Naive thymus-derived CD4-positive, alpha-beta T cell (primary cell): ENCODE measurements at regions of chr1 and their contacts with region 1.

Region 1: GRCh38 chr1:98053471-98054366 is 132.9 kb upstream of the DPYD start:
- DNase-seq: peak; percentile 12 to 74 (median 55)
- ATAC-seq: peak; percentile 91
- H3K4me3 ChIP-seq: peak overlapping the region; percentile 55
- H3K4me3 Mint-ChIP-seq: peak overlapping the region; percentile 61 to 81 (median 72)
- H3K27ac ChIP-seq: no peak overlapping the region
- H3K27ac Mint-ChIP-seq: no peak overlapping the region
- H3K4me1 ChIP-seq: peaks cover 6 to 20% of the 10 kb centered on the region in 2 donors
- H3K4me1 Mint-ChIP-seq: peaks cover 17 to 29% (median 23%) of the 10 kb centered on the region in 7 donors
- H3K27me3 ChIP-seq: peaks cover 18 to 23% of the 10 kb centered on the region in 2 donors
- H3K27me3 Mint-ChIP-seq: peaks cover 78 to 90% (median 80%) of the 10 kb centered on the region in 5 donors

Region 2: DNA sequence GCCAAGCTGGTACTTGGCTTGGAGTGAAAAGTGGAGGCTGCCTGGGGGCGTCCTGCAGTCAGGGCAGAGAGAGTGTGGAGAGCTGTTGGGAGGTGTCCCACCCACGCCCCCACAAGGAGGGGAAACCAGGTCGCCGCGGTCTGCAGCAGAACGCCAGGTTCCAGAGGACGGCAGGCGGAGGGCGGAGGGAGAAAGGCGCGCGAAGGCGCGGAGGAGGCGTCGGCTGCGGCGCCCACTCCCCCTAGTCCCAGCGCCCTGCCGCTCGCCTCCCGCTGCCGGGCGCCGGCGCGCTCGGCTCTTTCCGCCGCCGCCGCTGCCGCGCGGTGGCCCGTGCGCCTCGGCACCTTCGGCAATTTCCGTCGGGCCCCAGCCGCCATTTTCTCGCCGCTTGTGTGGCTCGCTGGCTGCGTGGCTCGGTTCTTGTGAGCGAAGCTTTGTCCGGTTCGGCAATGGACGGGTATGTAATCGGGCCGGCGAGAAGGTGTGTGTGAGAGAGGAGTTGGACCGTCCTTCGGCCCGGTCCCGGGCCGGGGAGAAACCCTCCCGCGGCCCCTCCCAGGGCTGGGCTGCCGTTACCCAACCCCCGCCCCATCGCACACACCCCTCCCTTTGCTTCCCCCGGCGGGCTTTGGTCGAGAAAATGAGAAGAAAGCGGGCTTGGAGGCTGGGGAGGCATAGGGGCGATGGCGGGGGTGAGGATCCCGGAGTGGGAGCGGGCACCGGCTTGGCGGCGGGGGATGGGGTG is 1332.1 kb before region 1 on chr1 and contains the start of gene PTBP2:
- CTCF ChIA-PET with region 1: no interaction called
- POLR2A ChIA-PET with region 1: no interaction called
- intact Hi-C with region 1: loop called (anchors 5 to 10 kb)
- DNase-seq: peak; percentile 75 to 90 (median 86)
- ATAC-seq: peak; percentile 93
- H3K4me3 ChIP-seq: peak within 1 kb of the TSS; percentile 89
- H3K4me3 Mint-ChIP-seq: peak within 1 kb of the TSS; percentile 88 to 99 (median 97)
- H3K27ac ChIP-seq: peak within 1 kb of the TSS; percentile 84
- H3K27ac Mint-ChIP-seq: peak within 1 kb of the TSS; percentile 83 to 97 (median 95)
- H3K4me1 ChIP-seq: peaks cover 10 to 11% of the 10 kb centered on the region in 2 donors
- H3K4me1 Mint-ChIP-seq: peaks cover 17 to 35% (median 29%) of the 10 kb centered on the region in 7 donors
- H3K27me3 ChIP-seq: no peaks in the 10 kb centered on the region
- H3K27me3 Mint-ChIP-seq: peaks cover 0 to 16% (median 0%) of the 10 kb centered on the region in 5 donors
- total RNA-seq, gene PTBP2: 14.9 to 32.6 (median 25.6) TPM

Region 3: GRCh38 chr1:97186404-97186803 is 867.3 kb before region 1 on chr1:
- CTCF ChIA-PET with region 1: interaction called, 3 read pairs
- POLR2A ChIA-PET with region 1: no interaction called
- intact Hi-C with region 1: loop called (anchors 1 kb)
- DNase-seq: peak in 2 of 9 donors; percentile 1 to 2
- ATAC-seq: no peak
- H3K4me3 ChIP-seq: no peak overlapping the region
- H3K4me3 Mint-ChIP-seq: no peak overlapping the region
- H3K27ac ChIP-seq: no peak overlapping the region
- H3K27ac Mint-ChIP-seq: no peak overlapping the region
- H3K4me1 ChIP-seq: no peaks in the 10 kb centered on the region
- H3K4me1 Mint-ChIP-seq: peaks cover 0 to 1% (median 0%) of the 10 kb centered on the region in 7 donors
- H3K27me3 ChIP-seq: no peaks in the 10 kb centered on the region
- H3K27me3 Mint-ChIP-seq: no peaks in the 10 kb centered on the region

Region 4: GRCh38 chr1:97562081-97562480 is 491.6 kb before region 1 on chr1:
- CTCF ChIA-PET with region 1: no interaction called
- POLR2A ChIA-PET with region 1: no interaction called
- intact Hi-C with region 1: loop called in 1 of 2 experiments (anchors 5 kb)
- DNase-seq: no peak
- ATAC-seq: no peak
- H3K4me3 ChIP-seq: no peak overlapping the region
- H3K4me3 Mint-ChIP-seq: no peak overlapping the region
- H3K27ac ChIP-seq: no peak overlapping the region
- H3K27ac Mint-ChIP-seq: no peak overlapping the region
- H3K4me1 ChIP-seq: no peaks in the 10 kb centered on the region
- H3K4me1 Mint-ChIP-seq: peaks cover 0 to 4% (median 0%) of the 10 kb centered on the region in 7 donors
- H3K27me3 ChIP-seq: no peaks in the 10 kb centered on the region
- H3K27me3 Mint-ChIP-seq: no peaks in the 10 kb centered on the region

Region 5: DNA sequence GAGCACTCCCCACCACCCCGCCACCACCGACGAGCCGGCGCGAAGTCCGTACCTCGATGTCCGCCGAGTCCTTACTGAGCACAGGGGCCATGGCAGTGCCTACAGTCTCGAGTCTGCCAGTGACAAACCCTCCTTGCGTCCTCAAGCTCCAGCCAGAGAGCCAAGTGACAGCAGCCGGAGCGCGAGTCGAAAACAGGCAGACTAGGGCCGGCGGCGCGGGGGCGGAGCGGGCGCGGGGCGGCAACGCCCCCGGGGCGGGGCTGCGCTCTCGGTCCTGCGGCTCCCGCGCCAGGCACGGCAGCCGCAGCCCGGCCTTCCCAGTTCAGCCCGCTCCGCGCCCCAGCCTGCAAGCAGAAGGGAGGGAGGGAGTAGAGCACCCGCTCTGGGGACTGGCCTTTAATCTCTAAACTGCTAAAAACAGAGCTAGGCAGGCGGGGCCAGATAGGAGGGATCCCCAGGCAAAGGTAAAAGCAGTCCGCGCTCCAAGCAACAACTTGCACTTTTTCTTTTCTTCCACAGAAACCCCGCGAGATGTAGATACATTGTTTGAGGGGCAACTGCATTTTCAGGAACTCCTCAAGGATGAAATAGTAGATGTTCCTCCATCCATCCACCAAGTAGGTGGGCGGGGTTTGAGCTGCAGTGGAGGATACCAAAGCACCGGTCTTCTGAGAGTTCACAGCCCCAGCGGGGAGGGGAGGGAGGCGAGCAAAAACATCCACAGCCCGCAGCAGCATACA is 132.7 kb before region 1 on chr1 and contains the start of gene DPYD:
- CTCF ChIA-PET with region 1: interaction called, 3 read pairs
- POLR2A ChIA-PET with region 1: no interaction called
- intact Hi-C with region 1: loop called (anchors 1 kb)
- DNase-seq: peak; percentile 79 to 87 (median 84)
- ATAC-seq: peak; percentile 94
- H3K4me3 ChIP-seq: peak within 1 kb of the TSS; percentile 93
- H3K4me3 Mint-ChIP-seq: peak within 1 kb of the TSS; percentile 88 to 99 (median 98)
- H3K27ac ChIP-seq: peak within 1 kb of the TSS; percentile 90
- H3K27ac Mint-ChIP-seq: peak within 1 kb of the TSS; percentile 81 to 98 (median 96)
- H3K4me1 ChIP-seq: peaks cover 16 to 17% of the 10 kb centered on the region in 2 donors
- H3K4me1 Mint-ChIP-seq: peaks cover 35 to 57% (median 54%) of the 10 kb centered on the region in 7 donors
- H3K27me3 ChIP-seq: no peaks in the 10 kb centered on the region
- H3K27me3 Mint-ChIP-seq: no peaks in the 10 kb centered on the region
- total RNA-seq, gene DPYD: 52.6 to 87.2 (median 57.4) TPM

Region 6: GRCh38 chr1:98496246-98496995 is 442.7 kb after region 1 on chr1:
- CTCF ChIA-PET with region 1: no interaction called
- POLR2A ChIA-PET with region 1: no interaction called
- intact Hi-C with region 1: no loop called
- DNase-seq: no peak
- ATAC-seq: no peak
- H3K4me3 ChIP-seq: no peak overlapping the region
- H3K4me3 Mint-ChIP-seq: no peak overlapping the region
- H3K27ac ChIP-seq: no peak overlapping the region
- H3K27ac Mint-ChIP-seq: no peak overlapping the region
- H3K4me1 ChIP-seq: no peaks in the 10 kb centered on the region
- H3K4me1 Mint-ChIP-seq: no peaks in the 10 kb centered on the region
- H3K27me3 ChIP-seq: no peaks in the 10 kb centered on the region
- H3K27me3 Mint-ChIP-seq: peaks cover 0 to 5% (median 0%) of the 10 kb centered on the region in 5 donors